Heart right ventricle (tissue), 16 donors: ENCODE measurements at regions of chr14 and their contacts with region 1.

Region 1: GRCh38 chr14:68248481-68249255 is 429.1 kb downstream of the RAD51B start:
- DNase-seq: peak; percentile 23 to 31
- ATAC-seq: peak; percentile 51 to 79 (median 73)
- H3K4me3 ChIP-seq: no peak overlapping the region
- H3K27ac ChIP-seq: peak overlapping the region in 9 of 10 donors; percentile 77 to 94 (median 85)
- H3K4me1 ChIP-seq: peaks cover 27 to 85% (median 81%) of the 10 kb centered on the region in 9 donors
- H3K27me3 ChIP-seq: no peaks in the 10 kb centered on the region
- CTCF ChIP-seq: peak; percentile 61 to 76 (median 63)

Region 2: DNA sequence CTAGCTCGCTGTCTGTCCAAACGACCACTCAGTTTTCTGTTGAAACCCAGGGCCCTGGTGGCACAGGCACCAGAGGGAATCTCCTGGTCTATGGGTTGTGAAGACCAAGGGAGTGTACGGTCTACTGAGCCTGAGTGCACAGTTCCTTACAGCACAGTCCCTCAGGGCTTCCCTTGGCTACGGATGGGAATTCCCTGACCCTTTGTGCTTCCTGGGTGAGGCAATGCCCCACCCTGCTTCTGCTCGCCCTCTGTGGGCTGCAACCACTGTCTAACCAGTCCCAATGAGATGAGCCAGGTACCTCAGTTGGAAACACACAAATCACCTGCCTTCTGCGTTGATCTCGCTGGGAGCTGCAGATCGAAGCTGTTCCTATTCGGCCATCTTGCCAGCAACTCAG is 1718.1 kb before region 1 on chr14:
- intact Hi-C with region 1: no loop called
- DNase-seq: no peak
- ATAC-seq: no peak
- H3K4me3 ChIP-seq: no peak overlapping the region
- H3K27ac ChIP-seq: no peak overlapping the region
- H3K4me1 ChIP-seq: peaks cover 0 to 5% (median 0%) of the 10 kb centered on the region in 9 donors
- H3K27me3 ChIP-seq: no peaks in the 10 kb centered on the region
- CTCF ChIP-seq: no peak

Region 3: DNA sequence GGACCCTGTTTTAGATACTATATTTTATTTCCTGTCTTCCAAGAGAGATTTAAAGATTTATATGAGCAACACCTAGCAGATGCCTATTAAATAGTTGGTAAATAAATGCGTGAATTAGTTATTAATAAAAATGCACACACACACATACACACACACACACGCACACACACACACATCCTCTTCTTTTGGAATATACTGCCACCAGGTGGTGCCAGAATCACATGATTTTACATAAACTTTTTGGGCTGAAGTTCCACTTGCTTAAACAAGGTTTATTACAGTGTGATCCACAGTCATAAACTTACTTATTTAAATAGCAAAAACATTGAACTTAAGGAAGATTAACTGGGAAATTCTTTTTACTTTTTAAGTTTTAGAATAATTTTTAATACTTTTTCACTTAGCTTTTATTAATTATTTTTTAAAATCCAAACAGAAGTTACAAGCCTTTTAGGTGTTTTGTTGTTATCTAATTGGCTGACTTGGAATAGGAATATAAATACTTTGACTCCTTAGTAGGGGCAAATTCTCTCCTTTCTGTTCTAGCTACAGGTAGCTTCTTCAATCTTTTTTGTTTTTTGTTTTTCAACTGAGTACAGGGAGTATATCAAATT is 411.6 kb before region 1 on chr14:
- intact Hi-C with region 1: loop called in 1 of 10 experiments (anchors 5 kb)
- DNase-seq: peak in 1 of 2 donors; percentile 75
- ATAC-seq: peak in 1 of 8 donors; percentile 42
- H3K4me3 ChIP-seq: no peak overlapping the region
- H3K27ac ChIP-seq: no peak overlapping the region
- H3K4me1 ChIP-seq: no peaks in the 10 kb centered on the region
- H3K27me3 ChIP-seq: no peaks in the 10 kb centered on the region
- CTCF ChIP-seq: peak; percentile 4 to 67 (median 56)

Region 4: DNA sequence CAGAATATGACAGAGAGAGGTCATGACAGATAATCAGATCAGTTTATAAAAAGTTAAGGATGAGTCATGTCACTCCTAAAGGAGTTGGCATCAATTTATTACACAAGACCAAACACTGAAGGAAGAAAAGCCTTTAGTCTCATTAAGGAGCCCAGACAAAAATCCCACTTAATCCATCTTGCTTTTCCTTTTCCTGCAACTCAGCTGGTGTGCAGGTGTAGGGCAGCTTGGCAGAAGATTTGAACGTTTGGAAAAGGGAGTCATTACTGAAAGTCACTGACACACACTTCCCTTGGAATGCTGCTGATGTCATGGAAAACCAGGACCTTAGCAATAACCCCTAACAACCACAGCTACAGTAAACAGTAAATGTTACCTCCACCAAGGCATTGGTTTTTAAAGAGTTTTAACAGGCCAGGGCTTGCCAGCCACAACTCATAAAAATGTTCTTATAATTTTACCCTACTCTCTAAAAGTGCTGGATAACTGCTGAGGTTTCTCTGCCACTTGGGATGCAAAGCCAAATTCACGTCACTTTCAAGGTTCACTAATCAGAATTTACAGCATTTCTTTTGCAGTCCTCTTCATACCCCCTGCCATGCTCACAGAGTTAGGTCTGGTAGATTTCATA is 108.4 kb before region 1 on chr14:
- intact Hi-C with region 1: loop called in 4 of 10 experiments (anchors 2 to 5 kb)
- DNase-seq: peak in 1 of 2 donors; percentile 72
- ATAC-seq: peak; percentile 25 to 77 (median 60)
- H3K4me3 ChIP-seq: no peak overlapping the region
- H3K27ac ChIP-seq: peak overlapping the region; percentile 6 to 78 (median 52)
- H3K4me1 ChIP-seq: peaks cover 15 to 74% (median 45%) of the 10 kb centered on the region in 9 donors
- H3K27me3 ChIP-seq: no peaks in the 10 kb centered on the region
- CTCF ChIP-seq: no peak

Region 5: GRCh38 chr14:68172627-68173026 is 76.0 kb before region 1 on chr14:
- intact Hi-C with region 1: no loop called
- DNase-seq: no peak
- ATAC-seq: no peak
- H3K4me3 ChIP-seq: no peak overlapping the region
- H3K27ac ChIP-seq: no peak overlapping the region
- H3K4me1 ChIP-seq: no peaks in the 10 kb centered on the region
- H3K27me3 ChIP-seq: no peaks in the 10 kb centered on the region
- CTCF ChIP-seq: no peak

Region 6: DNA sequence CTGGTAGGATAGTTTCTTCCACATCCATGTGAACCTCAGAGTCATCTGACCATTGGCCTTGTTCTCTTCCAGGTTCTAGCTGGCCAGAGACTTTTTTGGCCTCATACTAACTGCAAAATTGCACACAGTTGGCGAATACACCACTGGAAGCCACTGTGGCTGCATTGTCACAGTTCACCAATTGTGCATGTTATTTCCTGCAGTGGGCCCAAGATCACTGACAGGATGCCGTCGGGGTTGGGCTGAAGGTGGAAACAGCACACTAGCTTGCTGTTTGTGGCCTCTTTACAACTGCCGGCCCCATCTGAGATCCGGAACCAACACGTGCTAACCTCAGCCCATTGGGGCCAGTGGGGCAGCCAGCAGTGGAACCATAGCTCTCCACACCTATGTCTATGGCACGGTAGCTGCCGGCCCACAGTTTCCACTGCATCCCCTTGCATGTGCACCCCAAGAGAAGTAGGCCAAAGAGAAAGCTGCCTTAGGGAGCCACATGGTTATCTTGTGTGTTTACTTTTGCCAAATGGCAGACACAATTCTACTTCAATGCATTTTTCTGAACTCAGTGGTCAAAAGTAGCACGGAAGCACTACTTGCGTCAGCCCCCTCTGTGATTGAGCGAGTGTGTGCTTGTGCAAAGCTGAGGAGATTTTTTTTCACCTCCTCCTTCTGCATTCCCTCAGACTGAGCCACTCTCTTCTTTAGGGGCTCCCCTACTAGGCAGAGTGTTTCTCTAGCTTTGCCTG is 34.9 kb after region 1 on chr14:
- intact Hi-C with region 1: no loop called
- DNase-seq: peak in 1 of 2 donors; percentile 32
- ATAC-seq: peak; percentile 45 to 69 (median 58)
- H3K4me3 ChIP-seq: no peak overlapping the region
- H3K27ac ChIP-seq: peak overlapping the region in 8 of 10 donors; percentile 30 to 75 (median 48)
- H3K4me1 ChIP-seq: peaks cover 3 to 54% (median 18%) of the 10 kb centered on the region in 9 donors
- H3K27me3 ChIP-seq: no peaks in the 10 kb centered on the region
- CTCF ChIP-seq: no peak

Region 7: DNA sequence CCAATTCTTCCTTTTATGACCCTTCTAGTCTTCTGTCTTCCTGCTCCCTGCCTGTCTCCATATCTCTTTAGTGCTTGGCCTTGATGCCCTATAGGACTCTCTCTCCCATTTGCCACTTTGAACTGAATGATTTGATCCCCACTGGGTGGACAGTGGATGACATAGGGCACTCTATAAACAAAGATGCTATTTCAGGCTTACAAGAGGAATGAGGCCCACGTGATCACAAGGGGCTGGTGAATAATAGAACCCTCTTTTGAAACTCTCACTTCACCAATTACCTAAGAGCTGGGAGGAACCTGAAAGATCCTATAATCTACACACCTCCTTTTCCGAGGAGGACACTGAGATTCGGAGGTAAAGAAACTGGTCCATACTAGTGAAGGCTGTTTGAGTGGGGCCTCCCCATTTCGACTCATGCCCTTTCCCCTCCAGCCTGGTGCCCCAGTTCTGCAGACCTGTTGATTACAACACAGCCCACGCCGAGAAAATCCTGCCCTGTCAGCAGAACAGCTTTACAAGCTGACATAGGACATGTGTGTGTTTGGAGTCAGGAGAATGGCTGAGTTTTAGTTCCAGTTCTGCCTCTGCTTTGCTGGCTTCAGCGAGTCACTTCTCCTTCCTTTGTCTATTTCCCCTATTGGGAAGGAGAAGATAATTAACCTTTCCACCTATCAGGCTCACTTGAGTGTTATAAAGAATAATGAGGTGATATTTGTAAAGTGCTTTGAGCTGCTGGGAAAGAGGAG is 143.9 kb after region 1 on chr14:
- intact Hi-C with region 1: loop called in 3 of 10 experiments (anchors 10 kb)
- DNase-seq: peak; percentile 46 to 50
- ATAC-seq: peak; percentile 27 to 57 (median 51)
- H3K4me3 ChIP-seq: no peak overlapping the region
- H3K27ac ChIP-seq: peak overlapping the region in 9 of 10 donors; percentile 20 to 91 (median 73)
- H3K4me1 ChIP-seq: peaks cover 12 to 74% (median 55%) of the 10 kb centered on the region in 9 donors
- H3K27me3 ChIP-seq: no peaks in the 10 kb centered on the region
- CTCF ChIP-seq: no peak

Region 8: GRCh38 chr14:68426661-68427549 is 178.2 kb after region 1 on chr14:
- intact Hi-C with region 1: no loop called
- DNase-seq: no peak
- ATAC-seq: no peak
- H3K4me3 ChIP-seq: no peak overlapping the region
- H3K27ac ChIP-seq: no peak overlapping the region
- H3K4me1 ChIP-seq: no peaks in the 10 kb centered on the region
- H3K27me3 ChIP-seq: no peaks in the 10 kb centered on the region
- CTCF ChIP-seq: no peak

Region 9: GRCh38 chr14:68548194-68549056 is 299.8 kb after region 1 on chr14:
- intact Hi-C with region 1: loop called in 2 of 10 experiments (anchors 2 to 5 kb)
- DNase-seq: peak; percentile 87 to 94
- ATAC-seq: peak; percentile 87 to 95 (median 93)
- H3K4me3 ChIP-seq: no peak overlapping the region
- H3K27ac ChIP-seq: peak overlapping the region; percentile 91 to 97 (median 94)
- H3K4me1 ChIP-seq: peaks cover 28 to 85% (median 69%) of the 10 kb centered on the region in 9 donors
- H3K27me3 ChIP-seq: no peaks in the 10 kb centered on the region
- CTCF ChIP-seq: no peak

Region 10: GRCh38 chr14:68727315-68728047 is 478.8 kb after region 1 on chr14:
- intact Hi-C with region 1: loop called in 1 of 10 experiments (anchors 5 kb)
- DNase-seq: peak in 1 of 2 donors; percentile 52
- ATAC-seq: peak; percentile 49 to 82 (median 76)
- H3K4me3 ChIP-seq: no peak overlapping the region
- H3K27ac ChIP-seq: peak overlapping the region in 7 of 10 donors; percentile 7 to 77 (median 23)
- H3K4me1 ChIP-seq: peaks cover 16 to 69% (median 50%) of the 10 kb centered on the region in 9 donors
- H3K27me3 ChIP-seq: no peaks in the 10 kb centered on the region
- CTCF ChIP-seq: no peak

Region 11: GRCh38 chr14:68816262-68816942 is 567.7 kb after region 1 on chr14:
- intact Hi-C with region 1: loop called (anchors 1 to 5 kb)
- DNase-seq: peak; percentile 89 to 92
- ATAC-seq: peak; percentile 90 to 96 (median 92)
- H3K4me3 ChIP-seq: peak overlapping the region; percentile 22 to 68 (median 57)
- H3K27ac ChIP-seq: peak overlapping the region; percentile 98 to 100 (median 99)
- H3K4me1 ChIP-seq: peaks cover 6 to 64% (median 42%) of the 10 kb centered on the region in 9 donors
- H3K27me3 ChIP-seq: no peaks in the 10 kb centered on the region
- CTCF ChIP-seq: peak; percentile 95 to 99 (median 98)